ENCODE measurements at regions of chr14 and their contacts with region 1.

Region 1: GRCh38 chr14:32090686-32091085 is 13.6 kb downstream of the ARHGAP5 start:
- DNase-seq: no peak
- H3K4me3 ChIP-seq: no peak overlapping the region
- CTCF ChIP-seq: no peak
- POLR2A ChIP-seq: no peak

Region 2: DNA sequence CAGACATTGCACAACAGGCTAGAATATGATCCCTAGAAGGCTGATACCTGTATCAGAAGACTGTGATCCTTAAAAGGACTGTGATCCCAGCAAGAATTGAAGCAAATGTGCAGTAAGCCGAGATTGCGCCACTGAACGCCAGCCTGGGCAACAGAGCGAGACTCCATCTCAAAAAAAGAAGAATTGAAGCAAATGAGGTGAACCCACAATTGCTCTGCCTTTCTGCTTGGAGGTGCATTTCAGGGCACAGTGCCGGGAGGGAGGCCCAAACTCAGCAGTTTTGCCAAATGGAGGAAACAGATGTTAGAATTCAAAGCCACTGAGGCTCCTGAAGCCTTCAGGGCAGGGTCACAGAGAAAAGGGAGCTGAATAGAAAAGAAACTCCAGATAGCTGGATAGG is 1277.5 kb before region 1 on chr14:
- intact Hi-C with region 1: no loop called
- DNase-seq: no peak
- H3K4me3 ChIP-seq: no peak overlapping the region
- CTCF ChIP-seq: no peak
- POLR2A ChIP-seq: no peak

Region 3: DNA sequence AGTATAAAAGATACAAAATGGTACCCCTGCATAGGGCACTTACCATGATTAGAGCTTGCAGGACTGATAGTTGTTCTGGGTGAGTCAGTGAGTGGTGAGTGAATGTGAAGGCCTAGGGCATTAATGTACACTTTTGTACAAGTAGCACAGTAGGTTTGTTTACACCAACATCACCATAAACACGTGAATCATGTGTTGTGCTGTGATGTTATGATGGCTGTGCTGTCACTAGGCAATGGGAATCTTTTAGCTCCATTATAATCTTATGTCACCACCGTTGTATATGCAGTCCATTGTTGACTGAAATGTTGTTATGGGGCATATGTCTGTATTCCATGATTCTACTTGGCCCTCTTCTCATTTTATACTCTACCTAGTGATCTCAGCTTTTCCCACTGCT is 517.7 kb before region 1 on chr14:
- intact Hi-C with region 1: loop called (anchors 5 kb)
- DNase-seq: no peak
- H3K4me3 ChIP-seq: no peak overlapping the region
- CTCF ChIP-seq: no peak
- POLR2A ChIP-seq: no peak

Region 4: GRCh38 chr14:31895206-31895605 is 195.5 kb before region 1 on chr14:
- intact Hi-C with region 1: no loop called
- DNase-seq: no peak
- H3K4me3 ChIP-seq: no peak overlapping the region
- CTCF ChIP-seq: no peak
- POLR2A ChIP-seq: no peak

Region 5: GRCh38 chr14:32121948-32122347 is 31.3 kb after region 1 on chr14:
- intact Hi-C with region 1: no loop called
- DNase-seq: no peak
- H3K4me3 ChIP-seq: no peak overlapping the region
- CTCF ChIP-seq: no peak
- POLR2A ChIP-seq: no peak